H1 (cell line): ENCODE measurements at regions of chr1 and their contacts with region 1.

Region 1: GRCh38 chr1:175887981-175888433 is 144.6 kb upstream of the TNR start:
- DNase-seq: peak; percentile 68 to 89
- H3K4me3 ChIP-seq: peak overlapping the region; percentile 1 to 50 (median 28); a peak in 6 of 8 replicates
- H3K27ac ChIP-seq: no peak overlapping the region
- H3K4me1 ChIP-seq: peaks cover 0 to 7% (median 5%) of the 10 kb centered on the region in 4 experiments; a peak in 5 of 7 replicates
- H3K27me3 ChIP-seq: peaks cover 18 to 49% (median 44%) of the 10 kb centered on the region in 4 experiments
- CTCF ChIP-seq: peak; percentile 87 to 94 (median 92)
- EP300 ChIP-seq: peak in 1 of 2 experiments; percentile 40; a peak in 1 of 3 replicates
- POLR2A ChIP-seq: no peak
- RAD21 ChIP-seq: peak; percentile 89 to 93

Region 2: GRCh38 chr1:175768610-175769009 is 119.4 kb before region 1 on chr1:
- CTCF ChIA-PET with region 1: interaction called, 11 read pairs
- POLR2A ChIA-PET with region 1: no interaction called
- DNase-seq: no peak
- H3K4me3 ChIP-seq: no peak overlapping the region
- H3K27ac ChIP-seq: no peak overlapping the region
- H3K4me1 ChIP-seq: no peaks in the 10 kb centered on the region
- H3K27me3 ChIP-seq: no peaks in the 10 kb centered on the region; a peak in 1 of 7 replicates
- CTCF ChIP-seq: no peak
- EP300 ChIP-seq: no peak
- POLR2A ChIP-seq: no peak
- RAD21 ChIP-seq: no peak

Region 3: GRCh38 chr1:175865041-175865766 is 22.8 kb before region 1 on chr1:
- CTCF ChIA-PET with region 1: interaction called, 36 read pairs
- POLR2A ChIA-PET with region 1: no interaction called
- DNase-seq: peak; percentile 65 to 71
- H3K4me3 ChIP-seq: peak overlapping the region in 3 of 4 experiments; percentile 8 to 42 (median 16); a peak in 3 of 8 replicates
- H3K27ac ChIP-seq: peak overlapping the region; percentile 4; the same call in 1 of the 2 replicates
- H3K4me1 ChIP-seq: peaks cover 18 to 39% (median 30%) of the 10 kb centered on the region in 4 experiments
- H3K27me3 ChIP-seq: peaks cover 0 to 6% (median 3%) of the 10 kb centered on the region in 4 experiments; a peak in 4 of 7 replicates
- CTCF ChIP-seq: peak; percentile 27 to 55 (median 52); a peak in 3 of 4 replicates
- EP300 ChIP-seq: no peak
- POLR2A ChIP-seq: no peak
- RAD21 ChIP-seq: peak; percentile 36 to 47; a peak in 3 of 4 replicates

Region 4: GRCh38 chr1:175900171-175900570 is 12.2 kb after region 1 on chr1:
- CTCF ChIA-PET with region 1: interaction called, 24 read pairs
- POLR2A ChIA-PET with region 1: no interaction called
- DNase-seq: no peak
- H3K4me3 ChIP-seq: no peak overlapping the region
- H3K27ac ChIP-seq: no peak overlapping the region
- H3K4me1 ChIP-seq: no peaks in the 10 kb centered on the region
- H3K27me3 ChIP-seq: peaks cover 67 to 91% (median 85%) of the 10 kb centered on the region in 4 experiments
- CTCF ChIP-seq: no peak
- EP300 ChIP-seq: no peak
- POLR2A ChIP-seq: no peak
- RAD21 ChIP-seq: no peak

Region 5: DNA sequence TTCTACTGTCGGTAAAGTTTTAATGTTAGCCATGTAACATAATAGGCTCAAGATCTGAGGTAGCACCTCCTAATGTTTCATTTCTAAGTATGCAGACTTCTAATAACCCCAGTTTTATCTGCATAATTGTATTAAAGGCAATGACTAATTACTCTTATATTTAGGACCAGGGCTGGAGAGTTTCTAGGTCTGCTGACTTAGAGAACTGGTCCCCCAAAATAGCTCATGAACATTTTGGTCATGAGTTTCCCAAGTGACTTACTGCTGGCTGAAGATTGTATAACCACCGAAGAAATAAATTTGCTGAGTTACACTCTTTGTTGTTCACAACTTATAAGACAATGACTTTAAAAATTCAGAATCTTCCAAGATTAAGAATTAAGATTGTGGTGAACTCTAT is 53.2 kb after region 1 on chr1:
- CTCF ChIA-PET with region 1: no interaction called
- POLR2A ChIA-PET with region 1: no interaction called
- DNase-seq: no peak
- H3K4me3 ChIP-seq: no peak overlapping the region
- H3K27ac ChIP-seq: no peak overlapping the region
- H3K4me1 ChIP-seq: peaks cover 0 to 5% (median 2%) of the 10 kb centered on the region in 4 experiments; a peak in 2 of 7 replicates
- H3K27me3 ChIP-seq: no peaks in the 10 kb centered on the region
- CTCF ChIP-seq: no peak
- EP300 ChIP-seq: no peak
- POLR2A ChIP-seq: no peak
- RAD21 ChIP-seq: no peak